ENCODE measurements at regions of chr17 and their contacts with region 1.

Region 1: DNA sequence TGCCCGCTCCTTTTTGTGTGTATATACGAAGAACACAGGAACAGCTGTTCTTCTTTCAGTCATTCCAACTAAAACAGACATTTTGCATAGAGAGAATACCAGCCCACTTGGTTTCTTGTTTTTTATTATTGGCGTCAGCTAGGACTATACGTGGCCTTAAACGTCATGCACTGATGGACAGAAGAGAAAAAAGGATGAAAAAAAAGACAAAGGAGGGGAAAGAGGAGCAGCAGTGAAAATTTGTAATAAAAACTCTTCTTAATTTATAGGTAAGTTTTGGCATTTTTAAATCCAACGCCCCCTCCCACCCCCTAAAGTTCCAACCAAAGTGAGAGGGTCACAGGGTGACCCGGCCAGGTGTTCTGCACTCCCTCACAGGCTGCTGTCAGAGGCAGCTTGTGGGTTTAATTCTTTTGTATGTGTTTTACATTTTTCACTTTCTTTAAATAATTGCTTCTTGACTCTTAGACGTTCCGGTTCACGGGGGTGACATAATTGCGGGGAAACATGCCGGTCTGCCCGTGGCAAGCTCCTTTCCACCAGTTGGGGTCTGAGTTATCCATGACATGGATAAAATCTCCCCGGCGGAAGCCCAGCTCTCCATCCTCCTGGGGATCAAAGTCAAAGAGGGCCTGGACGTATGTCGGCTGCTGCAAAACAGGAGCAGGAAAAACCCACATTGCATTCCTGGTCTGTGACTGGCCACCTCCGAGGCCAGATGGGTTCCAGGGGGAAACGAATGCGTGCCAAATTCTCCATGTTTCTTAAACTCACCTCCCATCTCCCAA is 30.9 kb upstream of the SLC25A19 start:
- DNase-seq: no peak
- H3K4me3 ChIP-seq: no peak overlapping the region
- H3K27ac ChIP-seq: no peak overlapping the region
- H3K4me1 ChIP-seq: peaks cover 0 to 5% (median under 1%) of the 10 kb centered on the region in 4 experiments; a peak in 3 of 7 replicates
- H3K27me3 ChIP-seq: no peaks in the 10 kb centered on the region
- CTCF ChIP-seq: no peak
- EP300 ChIP-seq: no peak
- POLR2A ChIP-seq: no peak
- RAD21 ChIP-seq: no peak

Region 2: DNA sequence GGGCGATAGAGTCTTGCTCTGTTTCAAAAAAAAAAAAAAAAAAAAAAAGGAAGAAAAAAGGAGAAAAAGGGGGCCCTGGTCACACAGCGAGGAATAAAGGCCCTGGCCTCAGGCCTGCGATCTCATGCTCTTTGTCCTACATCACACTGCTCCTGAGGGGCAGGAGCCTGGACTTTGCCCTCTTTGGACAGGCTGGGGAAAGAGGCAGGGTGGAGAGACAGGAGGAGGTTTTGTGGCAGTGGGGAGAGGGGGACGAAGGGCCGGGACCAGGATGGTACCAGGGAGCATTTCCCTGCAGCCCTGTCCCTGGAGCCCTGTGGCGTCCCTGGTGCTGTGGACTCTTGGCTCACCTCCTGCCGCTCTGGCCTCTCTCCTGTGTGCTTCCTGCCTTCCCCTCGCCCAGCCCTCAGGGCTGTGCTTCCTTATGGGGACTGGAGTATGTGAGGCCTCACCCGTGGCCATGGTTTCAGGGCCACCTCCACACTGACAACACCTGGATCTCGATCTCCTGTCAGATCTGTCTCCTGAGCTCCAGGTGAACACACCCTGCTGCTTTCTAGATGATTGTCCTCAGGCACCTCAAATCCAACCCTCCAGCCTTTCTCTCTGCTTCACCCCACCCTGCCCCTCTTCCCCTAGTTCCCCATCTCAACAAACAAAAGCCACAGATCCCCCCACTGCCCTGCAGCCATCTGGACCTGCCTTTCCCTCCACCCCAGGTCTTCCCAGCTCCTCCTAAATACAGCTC is 10.9 kb before region 1 on chr17:
- CTCF ChIA-PET with region 1: interaction called, 17 read pairs
- POLR2A ChIA-PET with region 1: interaction called, 3 read pairs
- DNase-seq: no peak
- H3K4me3 ChIP-seq: no peak overlapping the region
- H3K27ac ChIP-seq: no peak overlapping the region
- H3K4me1 ChIP-seq: peaks cover 0 to 4% (median 2%) of the 10 kb centered on the region in 4 experiments; a peak in 1 of 7 replicates
- H3K27me3 ChIP-seq: no peaks in the 10 kb centered on the region
- CTCF ChIP-seq: no peak
- EP300 ChIP-seq: no peak
- POLR2A ChIP-seq: no peak
- RAD21 ChIP-seq: no peak

Region 3: DNA sequence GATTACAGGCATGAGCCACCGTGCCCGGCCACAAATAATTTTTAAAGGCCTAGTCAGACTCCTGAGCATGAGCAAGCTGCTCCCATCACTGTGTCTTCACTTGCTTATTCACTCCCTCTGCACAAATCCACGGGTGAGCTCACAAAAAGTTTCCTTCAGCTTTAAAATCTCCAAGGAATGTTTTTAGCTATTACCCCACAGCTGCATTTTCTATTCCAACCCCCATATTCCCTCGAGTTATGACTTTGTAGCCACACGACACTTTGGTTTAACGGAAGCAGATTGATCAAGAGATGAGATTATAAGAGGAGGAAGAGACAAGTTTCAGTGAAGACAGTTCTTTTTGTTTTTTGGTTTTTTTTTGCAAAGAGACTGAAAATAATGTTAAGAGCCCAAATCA is 18.2 kb after region 1 on chr17:
- CTCF ChIA-PET with region 1: interaction called, 26 read pairs
- POLR2A ChIA-PET with region 1: interaction called, 7 read pairs
- DNase-seq: no peak
- H3K4me3 ChIP-seq: no peak overlapping the region
- H3K27ac ChIP-seq: no peak overlapping the region
- H3K4me1 ChIP-seq: peaks cover 2 to 13% (median 5%) of the 10 kb centered on the region in 4 experiments; a peak in 5 of 7 replicates
- H3K27me3 ChIP-seq: no peaks in the 10 kb centered on the region
- CTCF ChIP-seq: no peak
- EP300 ChIP-seq: no peak
- POLR2A ChIP-seq: no peak
- RAD21 ChIP-seq: no peak

Region 4: GRCh38 chr17:75356260-75356937 is 36.3 kb after region 1 on chr17:
- CTCF ChIA-PET with region 1: interaction called, 11 read pairs
- POLR2A ChIA-PET with region 1: interaction called, 3 read pairs
- DNase-seq: no peak
- H3K4me3 ChIP-seq: no peak overlapping the region
- H3K27ac ChIP-seq: no peak overlapping the region
- H3K4me1 ChIP-seq: peaks cover 3 to 7% (median 5%) of the 10 kb centered on the region in 4 experiments; a peak in 3 of 7 replicates
- H3K27me3 ChIP-seq: no peaks in the 10 kb centered on the region
- CTCF ChIP-seq: no peak
- EP300 ChIP-seq: no peak
- POLR2A ChIP-seq: no peak
- RAD21 ChIP-seq: no peak

Region 5: DNA sequence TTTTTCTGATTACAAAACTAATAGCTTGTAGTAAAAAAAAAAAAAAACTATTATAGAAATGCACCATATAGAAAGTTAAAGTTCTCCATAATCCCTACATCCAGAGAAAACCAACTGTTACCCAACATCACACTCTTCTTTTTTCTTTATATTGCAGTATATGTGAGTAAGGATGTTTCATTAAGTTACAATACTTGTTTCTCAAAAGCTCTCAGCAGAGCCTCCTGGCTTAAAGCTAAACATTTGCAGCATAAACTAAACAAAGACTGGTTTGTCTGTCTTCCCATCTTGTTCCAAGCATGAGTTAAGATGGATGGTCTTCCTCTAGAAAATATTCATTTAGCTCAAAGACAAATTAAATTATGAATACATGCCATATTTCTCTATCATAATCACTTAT is 60.2 kb after region 1 on chr17:
- CTCF ChIA-PET with region 1: interaction called, 13 read pairs
- POLR2A ChIA-PET with region 1: interaction called, 3 read pairs
- DNase-seq: no peak
- H3K4me3 ChIP-seq: no peak overlapping the region
- H3K27ac ChIP-seq: no peak overlapping the region
- H3K4me1 ChIP-seq: peaks cover 0 to 5% (median 1%) of the 10 kb centered on the region in 4 experiments; a peak in 4 of 7 replicates
- H3K27me3 ChIP-seq: no peaks in the 10 kb centered on the region
- CTCF ChIP-seq: no peak
- EP300 ChIP-seq: no peak
- POLR2A ChIP-seq: no peak
- RAD21 ChIP-seq: no peak

Region 6: DNA sequence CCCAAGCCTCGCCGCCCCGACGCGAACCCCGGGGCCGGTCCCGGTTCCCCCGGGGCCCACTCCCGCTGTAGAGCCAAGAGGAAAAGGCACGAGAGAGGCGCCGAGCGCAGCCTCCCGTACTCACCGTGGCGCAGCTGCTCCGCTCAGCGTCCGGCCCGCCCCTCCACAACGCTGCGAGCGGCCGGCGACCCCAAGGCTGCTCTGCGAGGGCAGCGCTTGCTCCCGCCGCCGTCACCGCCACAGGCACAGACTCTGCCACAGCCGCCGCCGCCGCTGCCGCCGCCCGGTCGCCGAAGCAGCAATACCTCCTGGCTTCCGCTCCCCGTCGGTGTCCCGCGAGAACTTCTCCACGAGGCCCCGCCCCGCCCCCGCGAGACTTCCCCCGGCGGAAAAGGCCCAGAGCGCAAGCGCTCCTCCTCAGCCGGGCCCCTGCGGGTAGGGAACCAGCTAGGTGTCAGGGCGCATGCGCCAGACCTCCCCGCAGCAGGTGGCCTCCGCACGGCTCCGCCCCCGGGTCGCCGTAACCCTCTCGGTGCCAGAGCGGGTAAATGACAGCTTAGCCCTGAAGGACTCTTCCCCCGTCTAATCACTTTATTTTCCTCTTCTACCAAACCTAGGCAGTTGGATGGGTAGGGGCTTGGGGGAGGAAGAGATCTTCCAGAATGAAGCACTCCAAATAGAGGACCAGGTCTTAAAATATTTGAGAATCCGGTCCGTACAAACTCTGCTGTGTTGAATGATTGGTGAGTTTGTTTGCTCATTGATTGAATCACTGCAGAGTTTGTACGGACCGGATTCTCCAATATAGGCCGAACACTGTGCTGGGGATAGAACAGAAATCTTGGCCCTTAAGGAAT is 85.5 kb after region 1 on chr17 and contains the start of gene GRB2:
- CTCF ChIA-PET with region 1: interaction called, 97 read pairs
- POLR2A ChIA-PET with region 1: interaction called, 6 read pairs
- DNase-seq: peak; percentile 84 to 100
- H3K4me3 ChIP-seq: peak within 1 kb of the TSS; percentile 90 to 94 (median 92)
- H3K27ac ChIP-seq: no peak within 1 kb of the TSS
- H3K4me1 ChIP-seq: no peaks in the 10 kb centered on the region
- H3K27me3 ChIP-seq: no peaks in the 10 kb centered on the region
- CTCF ChIP-seq: no peak
- EP300 ChIP-seq: no peak
- POLR2A ChIP-seq: peak in 1 of 2 experiments; percentile 73; a peak in 2 of 3 replicates
- RAD21 ChIP-seq: no peak
- total RNA-seq, gene GRB2: 101 and 102 TPM in 2 replicates

Region 7: GRCh38 chr17:75447951-75448856 is 128.1 kb after region 1 on chr17:
- CTCF ChIA-PET with region 1: no interaction called
- POLR2A ChIA-PET with region 1: no interaction called
- DNase-seq: no peak
- H3K4me3 ChIP-seq: no peak overlapping the region
- H3K27ac ChIP-seq: no peak overlapping the region
- H3K4me1 ChIP-seq: no peaks in the 10 kb centered on the region
- H3K27me3 ChIP-seq: no peaks in the 10 kb centered on the region
- CTCF ChIP-seq: no peak
- EP300 ChIP-seq: no peak
- POLR2A ChIP-seq: no peak
- RAD21 ChIP-seq: no peak